ENCODE measurements at regions of chr12 and their contacts with region 1.

Region 1: GRCh38 chr12:95217377-95218149 is at the starts of genes FGD6 and VEZT:
- DNase-seq: peak; percentile 90 to 99 (median 98)
- ATAC-seq: peak; percentile 94
- H3K4me3 ChIP-seq: peak within 1 kb of the TSS; percentile 87
- H3K4me3 Mint-ChIP-seq: peak within 1 kb of the TSS; percentile 88 to 100 (median 96)
- H3K27ac ChIP-seq: peak within 1 kb of the TSS; percentile 94
- H3K27ac Mint-ChIP-seq: peak within 1 kb of the TSS; percentile 86 to 97 (median 95)
- H3K4me1 ChIP-seq: peaks cover 0 to 8% of the 10 kb centered on the region in 2 donors
- H3K4me1 Mint-ChIP-seq: peaks cover 25 to 53% (median 45%) of the 10 kb centered on the region in 7 donors
- H3K27me3 ChIP-seq: no peaks in the 10 kb centered on the region
- H3K27me3 Mint-ChIP-seq: peaks cover 0 to 20% (median 7%) of the 10 kb centered on the region in 5 donors
- total RNA-seq, gene FGD6: 0.70 to 8.6 (median 1.1) TPM
- total RNA-seq, gene VEZT: 37.2 to 48.8 (median 44.2) TPM

Region 2: DNA sequence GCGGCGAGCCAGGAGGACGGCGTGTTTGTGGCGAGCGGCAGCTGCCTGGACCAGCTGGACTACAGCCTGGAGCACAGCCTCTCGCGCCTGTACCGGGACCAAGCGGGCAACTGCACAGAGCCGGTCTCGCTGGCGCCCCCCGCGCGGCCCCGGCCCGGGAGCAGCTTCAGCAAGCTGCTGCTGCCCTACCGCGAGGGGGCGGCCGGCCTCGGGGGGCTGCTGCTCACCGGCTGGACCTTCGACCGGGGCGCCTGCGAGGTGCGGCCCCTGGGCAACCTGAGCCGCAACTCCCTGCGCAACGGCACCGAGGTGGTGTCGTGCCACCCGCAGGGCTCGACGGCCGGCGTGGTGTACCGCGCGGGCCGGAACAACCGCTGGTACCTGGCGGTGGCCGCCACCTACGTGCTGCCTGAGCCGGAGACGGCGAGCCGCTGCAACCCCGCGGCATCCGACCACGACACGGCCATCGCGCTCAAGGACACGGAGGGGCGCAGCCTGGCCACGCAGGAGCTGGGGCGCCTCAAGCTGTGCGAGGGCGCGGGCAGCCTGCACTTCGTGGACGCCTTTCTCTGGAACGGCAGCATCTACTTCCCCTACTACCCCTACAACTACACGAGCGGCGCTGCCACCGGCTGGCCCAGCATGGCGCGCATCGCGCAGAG is 1068.3 kb before region 1 on chr12:
- CTCF ChIA-PET with region 1: no interaction called
- POLR2A ChIA-PET with region 1: no interaction called
- intact Hi-C with region 1: loop called in 1 of 2 experiments (anchors 1 kb)
- DNase-seq: peak; percentile 23 to 70 (median 45)
- ATAC-seq: peak; percentile 51
- H3K4me3 ChIP-seq: peak overlapping the region; percentile 75
- H3K4me3 Mint-ChIP-seq: peak overlapping the region; percentile 76 to 97 (median 93)
- H3K27ac ChIP-seq: peak overlapping the region; percentile 17
- H3K27ac Mint-ChIP-seq: peak overlapping the region in 3 of 9 donors; percentile 51 to 67 (median 63)
- H3K4me1 ChIP-seq: peaks cover 0 to 17% of the 10 kb centered on the region in 2 donors
- H3K4me1 Mint-ChIP-seq: peaks cover 18 to 53% (median 39%) of the 10 kb centered on the region in 7 donors
- H3K27me3 ChIP-seq: no peaks in the 10 kb centered on the region
- H3K27me3 Mint-ChIP-seq: peaks cover 0 to 31% (median 0%) of the 10 kb centered on the region in 5 donors

Region 3: DNA sequence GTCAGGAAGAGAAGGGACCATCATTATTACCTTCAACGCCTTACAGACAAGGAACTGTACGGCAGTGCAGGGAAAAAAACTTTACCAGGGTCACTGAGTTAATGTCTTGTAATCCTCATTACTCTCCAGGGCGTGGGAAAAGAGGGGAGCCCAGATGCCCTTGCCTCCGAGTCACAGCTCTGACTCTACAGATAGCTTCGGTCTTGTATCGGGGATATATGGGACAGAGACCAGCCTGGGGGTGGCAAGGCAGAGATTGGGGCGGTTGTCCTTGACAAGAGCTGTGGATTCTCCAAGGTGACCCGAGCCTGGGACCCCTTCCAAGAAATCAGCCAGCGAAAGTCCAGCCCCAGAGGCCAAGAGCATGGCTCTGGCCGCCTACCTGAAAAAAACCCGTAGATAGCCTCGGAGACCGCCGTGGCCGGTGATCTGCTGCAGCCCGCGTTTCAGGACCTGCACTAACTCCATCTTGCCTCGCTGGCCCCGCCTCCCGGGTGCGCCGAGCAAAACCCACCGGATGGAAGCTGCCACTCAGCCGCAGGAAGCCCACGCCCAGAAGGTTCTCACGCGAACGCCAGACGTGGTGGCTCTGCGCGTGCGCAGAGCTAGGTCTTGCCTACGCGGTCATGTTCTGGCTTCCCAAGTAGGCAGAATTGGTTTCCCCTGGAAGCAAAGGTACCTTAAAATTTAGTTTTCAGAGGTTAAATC is 214.2 kb before region 1 on chr12 and contains the start of gene NDUFA12:
- CTCF ChIA-PET with region 1: no interaction called
- POLR2A ChIA-PET with region 1: no interaction called
- intact Hi-C with region 1: loop called (anchors 1 to 2 kb)
- DNase-seq: peak; percentile 89 to 95 (median 92)
- ATAC-seq: peak; percentile 100
- H3K4me3 ChIP-seq: peak within 1 kb of the TSS; percentile 72
- H3K4me3 Mint-ChIP-seq: peak within 1 kb of the TSS; percentile 87 to 97 (median 96)
- H3K27ac ChIP-seq: peak within 1 kb of the TSS; percentile 84
- H3K27ac Mint-ChIP-seq: peak within 1 kb of the TSS; percentile 86 to 97 (median 95)
- H3K4me1 ChIP-seq: peaks cover 27 to 56% of the 10 kb centered on the region in 2 donors
- H3K4me1 Mint-ChIP-seq: peaks cover 39 to 79% (median 64%) of the 10 kb centered on the region in 7 donors
- H3K27me3 ChIP-seq: no peaks in the 10 kb centered on the region
- H3K27me3 Mint-ChIP-seq: no peaks in the 10 kb centered on the region
- total RNA-seq, gene NDUFA12: 57.8 to 123 (median 68.5) TPM

Region 4: DNA sequence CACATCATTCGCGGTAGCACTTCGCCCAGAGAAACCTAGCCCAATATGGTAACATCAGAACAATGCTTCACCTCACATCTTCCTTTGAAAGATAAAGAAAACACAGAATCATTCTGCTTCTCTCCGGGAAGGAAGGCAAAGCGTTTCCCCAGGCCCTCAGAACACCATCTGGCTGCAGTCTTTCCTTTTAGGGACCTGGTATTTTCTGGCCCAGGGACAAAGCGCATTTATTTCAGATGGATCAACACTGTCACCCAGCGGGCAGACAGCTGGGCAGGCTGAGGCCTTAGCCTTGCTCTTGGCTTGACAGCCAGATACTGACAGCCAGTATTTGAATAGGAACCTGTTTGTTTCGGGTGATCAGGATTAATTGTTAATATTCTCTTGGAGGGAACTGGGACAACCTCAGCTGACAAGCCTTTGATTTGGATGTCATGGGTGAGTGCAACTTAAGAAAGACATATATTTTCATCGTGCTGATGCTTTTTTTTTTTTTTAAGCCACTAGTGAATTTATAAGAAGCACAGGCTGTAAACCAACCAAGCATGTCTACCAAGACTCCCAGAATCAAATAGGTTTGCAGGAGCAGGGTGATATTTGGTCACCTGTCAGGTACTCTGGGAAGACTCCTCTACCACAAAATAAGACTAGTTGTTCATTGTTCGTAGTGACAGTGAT is 119.0 kb after region 1 on chr12:
- CTCF ChIA-PET with region 1: no interaction called
- POLR2A ChIA-PET with region 1: no interaction called
- intact Hi-C with region 1: loop called (anchors 1 to 5 kb)
- DNase-seq: no peak
- ATAC-seq: no peak
- H3K4me3 ChIP-seq: no peak overlapping the region
- H3K4me3 Mint-ChIP-seq: no peak overlapping the region
- H3K27ac ChIP-seq: no peak overlapping the region
- H3K27ac Mint-ChIP-seq: peak overlapping the region in 3 of 9 donors; percentile 31 to 52 (median 48)
- H3K4me1 ChIP-seq: no peaks in the 10 kb centered on the region
- H3K4me1 Mint-ChIP-seq: peaks cover 0 to 9% (median 5%) of the 10 kb centered on the region in 7 donors
- H3K27me3 ChIP-seq: no peaks in the 10 kb centered on the region
- H3K27me3 Mint-ChIP-seq: peaks cover 0 to 2% (median 0%) of the 10 kb centered on the region in 5 donors

Region 5: GRCh38 chr12:95548539-95549391 is 331.2 kb after region 1 on chr12:
- CTCF ChIA-PET with region 1: no interaction called
- POLR2A ChIA-PET with region 1: no interaction called
- intact Hi-C with region 1: loop called (anchors 1 to 2 kb)
- DNase-seq: peak; percentile 66 to 81 (median 77)
- ATAC-seq: peak; percentile 94
- H3K4me3 ChIP-seq: peak overlapping the region; percentile 75
- H3K4me3 Mint-ChIP-seq: peak overlapping the region; percentile 89 to 96 (median 94)
- H3K27ac ChIP-seq: peak overlapping the region; percentile 96
- H3K27ac Mint-ChIP-seq: peak overlapping the region; percentile 70 to 98 (median 94)
- H3K4me1 ChIP-seq: peaks cover 6 to 23% of the 10 kb centered on the region in 2 donors
- H3K4me1 Mint-ChIP-seq: peaks cover 36 to 73% (median 61%) of the 10 kb centered on the region in 7 donors
- H3K27me3 ChIP-seq: no peaks in the 10 kb centered on the region
- H3K27me3 Mint-ChIP-seq: peaks cover 0 to 22% (median 7%) of the 10 kb centered on the region in 5 donors

Region 6: GRCh38 chr12:96194971-96195844 is 977.6 kb after region 1 on chr12:
- CTCF ChIA-PET with region 1: no interaction called
- POLR2A ChIA-PET with region 1: no interaction called
- intact Hi-C with region 1: loop called (anchors 5 to 10 kb)
- DNase-seq: peak in 8 of 9 donors; percentile 34 to 91 (median 71)
- ATAC-seq: peak; percentile 80
- H3K4me3 ChIP-seq: peak overlapping the region; percentile 84
- H3K4me3 Mint-ChIP-seq: peak overlapping the region; percentile 92 to 100 (median 98)
- H3K27ac ChIP-seq: peak overlapping the region; percentile 86
- H3K27ac Mint-ChIP-seq: peak overlapping the region; percentile 95 to 99 (median 99)
- H3K4me1 ChIP-seq: peaks cover 29 to 33% of the 10 kb centered on the region in 2 donors
- H3K4me1 Mint-ChIP-seq: peaks cover 30 to 54% (median 46%) of the 10 kb centered on the region in 7 donors
- H3K27me3 ChIP-seq: no peaks in the 10 kb centered on the region
- H3K27me3 Mint-ChIP-seq: peaks cover 0 to 3% (median 0%) of the 10 kb centered on the region in 5 donors

Measured in naive thymus-derived CD4-positive, alpha-beta T cell (primary cell).